Testis (tissue), 5 donors: ENCODE measurements at regions of chr1 and their contacts with region 1.

Region 1: GRCh38 chr1:191641420-191642260 is 516.6 kb upstream of the RGS18 start:
- DNase-seq: no peak
- H3K4me3 ChIP-seq: no peak overlapping the region
- H3K27ac ChIP-seq: no peak overlapping the region
- H3K4me1 ChIP-seq: no peaks in the 10 kb centered on the region
- H3K27me3 ChIP-seq: no peaks in the 10 kb centered on the region
- CTCF ChIP-seq: no peak
- POLR2A ChIP-seq: no peak

Region 2: DNA sequence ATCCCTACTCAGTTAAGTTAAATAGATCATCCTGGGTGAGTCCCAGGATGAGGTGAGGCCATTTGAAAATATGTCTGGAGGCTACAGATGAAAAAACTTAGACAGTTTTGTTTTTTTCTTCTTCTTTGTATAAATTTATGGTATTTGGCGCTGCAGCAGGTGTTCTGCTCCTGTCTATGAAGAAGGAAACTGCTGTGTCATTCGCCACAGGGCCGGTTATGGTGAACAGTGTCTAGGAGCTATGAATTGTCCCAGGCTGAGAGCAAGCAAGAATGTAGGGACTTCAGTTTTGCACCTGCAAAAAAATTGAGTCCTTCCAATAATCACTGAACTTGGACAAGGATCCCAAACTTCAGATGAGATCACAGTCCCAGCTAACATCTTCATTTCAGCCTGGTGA is 157.7 kb before region 1 on chr1:
- intact Hi-C with region 1: no loop called
- DNase-seq: no peak
- H3K4me3 ChIP-seq: no peak overlapping the region
- H3K27ac ChIP-seq: no peak overlapping the region
- H3K4me1 ChIP-seq: no peaks in the 10 kb centered on the region
- H3K27me3 ChIP-seq: no peaks in the 10 kb centered on the region
- CTCF ChIP-seq: no peak
- POLR2A ChIP-seq: no peak

Region 3: DNA sequence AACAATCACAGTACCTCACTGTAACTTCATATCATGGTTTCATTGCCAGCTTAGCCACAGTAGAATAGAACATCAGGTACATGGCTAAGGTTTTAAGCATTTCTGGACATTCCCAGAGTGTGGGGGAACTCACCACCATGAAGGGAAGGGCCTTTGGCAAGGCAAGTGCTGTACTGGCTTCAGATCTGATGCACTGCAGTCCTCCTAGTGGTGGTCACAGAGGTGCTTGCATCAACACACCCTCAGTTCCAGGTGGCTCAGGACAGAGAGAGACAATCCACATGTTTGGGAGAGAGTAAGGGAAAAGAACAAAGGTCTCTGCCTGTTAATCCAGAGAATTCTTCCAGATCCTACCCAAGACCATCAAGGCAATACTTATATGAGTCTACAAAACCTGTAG is 11.8 kb before region 1 on chr1:
- intact Hi-C with region 1: loop called (anchors 2 kb)
- DNase-seq: no peak
- H3K4me3 ChIP-seq: no peak overlapping the region
- H3K27ac ChIP-seq: no peak overlapping the region
- H3K4me1 ChIP-seq: no peaks in the 10 kb centered on the region
- H3K27me3 ChIP-seq: no peaks in the 10 kb centered on the region
- CTCF ChIP-seq: no peak
- POLR2A ChIP-seq: no peak